Vagina (tissue), 2 donors: ENCODE measurements at regions of chr7 and their contacts with region 1.

Region 1: GRCh38 chr7:142853739-142854371 is 1.0 kb upstream of the EPHB6 start:
- DNase-seq: peak; percentile 88 to 96
- H3K4me3 ChIP-seq: peak overlapping the region; percentile 82 to 87
- H3K27ac ChIP-seq: peak overlapping the region; percentile 88
- H3K4me1 ChIP-seq: peaks cover 33% of the 10 kb centered on the region
- H3K27me3 ChIP-seq: no peaks in the 10 kb centered on the region
- CTCF ChIP-seq: peak; percentile 79 to 81 (median 81)
- POLR2A ChIP-seq: no peak

Region 2: DNA sequence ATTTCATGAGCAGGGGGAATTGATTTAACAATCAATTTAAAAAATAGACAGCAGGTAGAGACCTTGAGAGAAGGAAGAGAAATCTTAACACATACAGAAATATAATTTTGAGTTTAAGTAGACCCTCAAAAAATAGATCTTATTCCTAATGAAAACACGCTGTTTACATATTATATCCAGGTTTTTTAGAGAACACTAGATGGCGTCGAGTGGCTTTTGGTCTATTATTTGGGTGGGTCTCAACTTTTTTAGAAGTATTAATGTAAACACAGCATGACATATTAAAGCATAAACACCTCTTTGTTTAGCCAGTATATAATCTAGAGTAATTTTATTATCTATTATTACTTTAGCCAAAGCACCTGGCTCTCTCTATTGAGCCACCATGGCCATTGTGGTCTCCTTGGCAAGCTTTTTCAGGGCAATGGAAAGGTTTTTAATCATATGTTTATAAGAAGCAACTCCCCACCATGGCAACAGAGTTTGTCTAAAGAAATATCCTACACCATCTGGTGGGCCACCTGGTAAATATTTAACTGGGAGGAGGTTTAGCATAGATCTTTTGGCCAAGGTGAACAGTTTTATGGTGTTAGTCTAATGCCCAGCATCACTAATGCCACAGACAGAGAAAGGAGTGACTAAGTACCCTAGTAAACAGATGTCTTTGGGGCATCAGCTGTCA is 164.3 kb before region 1 on chr7:
- intact Hi-C with region 1: no loop called
- DNase-seq: no peak
- H3K4me3 ChIP-seq: no peak overlapping the region
- H3K27ac ChIP-seq: no peak overlapping the region
- H3K4me1 ChIP-seq: no peaks in the 10 kb centered on the region
- H3K27me3 ChIP-seq: no peaks in the 10 kb centered on the region
- CTCF ChIP-seq: no peak
- POLR2A ChIP-seq: no peak

Region 3: DNA sequence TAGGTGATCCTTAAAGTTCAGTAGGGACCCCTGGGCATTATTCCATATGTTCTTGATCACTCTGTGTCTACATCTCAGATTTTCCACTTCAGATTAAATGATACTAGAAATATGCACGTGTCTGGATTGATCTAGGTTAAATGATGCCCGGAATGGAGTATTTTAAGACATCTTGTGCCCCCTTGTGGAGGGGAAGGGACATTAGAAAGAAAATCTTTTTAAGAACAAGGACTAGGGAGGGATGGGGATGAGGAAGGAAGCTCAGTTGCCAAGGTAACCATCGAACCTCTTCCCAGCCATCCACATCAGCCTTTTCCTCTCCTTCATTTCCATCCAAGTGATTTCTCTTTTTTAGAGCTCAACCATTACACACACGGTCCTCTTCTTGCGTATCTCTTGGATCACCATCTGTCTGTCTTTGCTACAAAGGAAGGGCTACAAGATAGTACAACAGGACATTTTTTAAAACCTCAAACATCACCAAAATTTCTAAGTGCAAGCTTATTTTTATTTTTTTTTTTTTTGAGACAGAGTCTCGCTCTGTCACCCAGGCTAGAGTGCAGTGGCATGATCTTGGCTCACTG is 42.6 kb before region 1 on chr7:
- intact Hi-C with region 1: no loop called
- DNase-seq: no peak
- H3K4me3 ChIP-seq: no peak overlapping the region
- H3K27ac ChIP-seq: no peak overlapping the region
- H3K4me1 ChIP-seq: no peaks in the 10 kb centered on the region
- H3K27me3 ChIP-seq: no peaks in the 10 kb centered on the region
- CTCF ChIP-seq: peak; percentile 24 to 38 (median 30)
- POLR2A ChIP-seq: no peak

Region 4: GRCh38 chr7:142885284-142886230 is 31.7 kb after region 1 on chr7 and contains the start of gene TRPV6:
- intact Hi-C with region 1: no loop called
- DNase-seq: no peak
- H3K4me3 ChIP-seq: no peak within 1 kb of the TSS
- H3K27ac ChIP-seq: no peak within 1 kb of the TSS
- H3K4me1 ChIP-seq: peaks cover 12% of the 10 kb centered on the region
- H3K27me3 ChIP-seq: no peaks in the 10 kb centered on the region
- CTCF ChIP-seq: no peak
- POLR2A ChIP-seq: no peak
- total RNA-seq, gene TRPV6: 7.9 TPM

Region 5: GRCh38 chr7:143003393-143004051 is 149.7 kb after region 1 on chr7:
- intact Hi-C with region 1: loop called (anchors 5 kb)
- DNase-seq: no peak
- H3K4me3 ChIP-seq: peak overlapping the region in 1 of 2 donors; percentile 25
- H3K27ac ChIP-seq: peak overlapping the region; percentile 65
- H3K4me1 ChIP-seq: peaks cover 10% of the 10 kb centered on the region
- H3K27me3 ChIP-seq: no peaks in the 10 kb centered on the region
- CTCF ChIP-seq: peak; percentile 24 to 62 (median 51)
- POLR2A ChIP-seq: no peak

Region 6: DNA sequence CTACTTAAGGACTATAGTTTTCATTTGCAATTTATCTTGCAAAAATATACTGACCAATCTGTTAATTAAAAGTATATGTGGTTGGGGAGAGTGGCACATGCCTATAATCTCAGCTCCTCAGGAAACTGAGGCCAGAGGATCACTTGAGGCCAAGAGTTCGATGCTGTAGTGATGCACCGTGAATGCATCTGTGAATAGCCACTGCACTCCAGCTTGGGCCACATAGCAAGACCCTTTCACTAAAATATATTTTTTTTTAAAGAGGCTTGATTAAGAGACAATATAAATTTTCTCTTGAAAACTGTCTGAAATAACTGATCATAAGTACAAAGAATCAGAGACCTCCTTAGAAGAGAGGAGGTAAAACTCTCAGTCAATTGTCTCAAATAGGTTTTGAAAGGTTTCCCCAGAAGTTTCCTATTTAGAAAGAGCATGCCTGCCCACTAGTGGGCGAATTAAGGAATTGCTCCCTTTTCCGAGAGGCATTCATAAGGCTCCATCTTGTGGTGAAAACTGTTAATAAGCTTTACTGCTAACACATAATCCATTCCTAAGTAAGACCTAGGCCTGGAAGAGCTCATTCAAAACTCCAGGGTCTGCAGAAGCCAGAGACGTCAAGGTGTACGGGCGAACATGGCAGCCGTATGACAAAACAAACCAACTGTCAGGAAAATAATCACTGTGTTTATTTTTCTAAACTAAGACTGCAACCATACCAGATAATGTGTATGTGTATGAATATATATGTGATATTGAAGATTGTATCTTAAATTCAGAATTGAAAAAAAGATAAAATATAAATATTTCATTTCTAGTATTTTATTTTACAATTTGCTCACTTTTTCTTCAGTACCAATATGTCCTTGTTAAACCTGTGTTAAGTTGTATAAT is 361.2 kb after region 1 on chr7:
- intact Hi-C with region 1: loop called (anchors 10 kb)
- DNase-seq: no peak
- H3K4me3 ChIP-seq: no peak overlapping the region
- H3K27ac ChIP-seq: no peak overlapping the region
- H3K4me1 ChIP-seq: no peaks in the 10 kb centered on the region
- H3K27me3 ChIP-seq: no peaks in the 10 kb centered on the region
- CTCF ChIP-seq: peak; percentile 95 to 100 (median 100)
- POLR2A ChIP-seq: no peak